K562 (cell line): ENCODE measurements at regions of chr3 and their contacts with region 1.

Region 1: DNA sequence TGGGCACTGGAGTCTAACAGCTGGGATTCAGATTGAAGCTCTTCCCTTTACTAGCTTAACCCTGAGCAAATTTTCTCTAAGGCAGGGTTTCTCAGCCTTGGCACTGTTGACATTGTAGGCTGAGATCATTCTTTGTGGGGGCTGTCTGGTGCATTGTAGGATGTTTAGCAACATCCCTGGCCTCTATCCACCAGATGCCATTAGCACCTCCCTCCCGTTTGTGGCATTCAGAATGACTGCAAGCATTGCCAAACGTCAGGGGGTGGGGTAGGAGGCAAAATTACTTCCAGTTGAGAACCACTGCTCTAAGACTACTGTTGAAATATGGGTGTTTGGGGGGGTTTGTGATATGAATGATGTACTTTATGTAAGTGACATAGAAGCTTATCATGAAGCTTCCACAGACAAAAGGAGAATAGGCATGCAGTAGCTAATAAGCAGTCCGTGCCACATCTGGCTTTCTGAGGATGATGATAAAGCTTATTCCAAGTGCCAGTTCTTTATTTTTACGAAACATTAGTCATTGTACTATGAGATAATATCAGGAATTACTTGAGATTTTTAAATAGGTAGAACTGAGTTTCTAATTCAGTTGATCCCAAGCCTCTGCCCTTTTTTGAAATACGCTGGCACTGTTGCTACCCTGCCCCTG is 39.3 kb downstream of the NKIRAS1 start:
- DNase-seq: no peak
- ATAC-seq: no peak
- H3K4me3 ChIP-seq: no peak overlapping the region
- H3K27ac ChIP-seq: no peak overlapping the region
- H3K4me1 ChIP-seq: peaks cover 3% of the 10 kb centered on the region in 2 experiments; a peak in 3 of 5 replicates
- H3K27me3 ChIP-seq: no peaks in the 10 kb centered on the region
- CTCF ChIP-seq: no peak
- EP300 ChIP-seq: no peak
- POLR2A ChIP-seq: no peak
- RAD21 ChIP-seq: no peak

Region 2: DNA sequence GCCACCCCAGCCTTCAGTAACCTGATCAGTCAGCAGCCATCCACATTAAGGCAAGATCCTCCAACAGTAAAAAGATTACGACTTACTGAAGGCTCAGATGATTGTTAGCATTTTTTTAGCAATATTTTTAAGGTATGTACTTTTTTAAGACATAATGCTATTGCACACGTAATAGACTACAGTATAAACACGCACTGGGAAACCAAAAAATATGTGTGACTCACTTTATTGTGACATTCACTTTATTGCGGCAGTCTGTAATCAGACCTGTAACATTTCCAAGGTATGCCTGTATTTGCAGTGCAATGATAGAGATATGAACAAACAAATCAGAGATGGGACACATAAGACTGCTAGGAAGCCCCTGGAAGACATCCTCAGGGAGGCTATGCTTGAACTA is 297.1 kb before region 1 on chr3:
- CTCF ChIA-PET with region 1: no interaction called
- POLR2A ChIA-PET with region 1: no interaction called
- in situ Hi-C with region 1: no loop called
- intact Hi-C with region 1: no loop called
- DNase-seq: no peak
- ATAC-seq: no peak
- H3K4me3 ChIP-seq: no peak overlapping the region
- H3K27ac ChIP-seq: no peak overlapping the region
- H3K4me1 ChIP-seq: no peaks in the 10 kb centered on the region
- H3K27me3 ChIP-seq: no peaks in the 10 kb centered on the region
- CTCF ChIP-seq: no peak
- EP300 ChIP-seq: no peak
- POLR2A ChIP-seq: no peak
- RAD21 ChIP-seq: no peak

Region 3: GRCh38 chr3:23648326-23648995 is 229.0 kb before region 1 on chr3:
- CTCF ChIA-PET with region 1: no interaction called
- POLR2A ChIA-PET with region 1: no interaction called
- in situ Hi-C with region 1: no loop called
- intact Hi-C with region 1: no loop called
- DNase-seq: peak in 1 of 4 experiments; percentile 5
- ATAC-seq: no peak
- H3K4me3 ChIP-seq: no peak overlapping the region
- H3K27ac ChIP-seq: no peak overlapping the region
- H3K4me1 ChIP-seq: no peaks in the 10 kb centered on the region
- H3K27me3 ChIP-seq: peaks cover 0 to 8% of the 10 kb centered on the region in 2 experiments; a peak in 1 of 5 replicates
- CTCF ChIP-seq: peak in 1 of 3 experiments; percentile 14; a peak in 1 of 6 replicates
- EP300 ChIP-seq: no peak
- POLR2A ChIP-seq: no peak
- RAD21 ChIP-seq: peak in 1 of 2 experiments; percentile 37; a peak in 2 of 4 replicates

Region 4: GRCh38 chr3:23712656-23713559 is 164.5 kb before region 1 on chr3:
- CTCF ChIA-PET with region 1: no interaction called
- POLR2A ChIA-PET with region 1: interaction called, 3 read pairs
- in situ Hi-C with region 1: no loop called
- intact Hi-C with region 1: loop called (anchors 10 kb)
- DNase-seq: peak in 1 of 4 experiments; percentile 19
- ATAC-seq: peak; percentile 71
- H3K4me3 ChIP-seq: no peak overlapping the region
- H3K27ac ChIP-seq: no peak overlapping the region
- H3K4me1 ChIP-seq: no peaks in the 10 kb centered on the region
- H3K27me3 ChIP-seq: peaks cover 14 to 26% of the 10 kb centered on the region in 2 experiments; a peak in 4 of 5 replicates
- CTCF ChIP-seq: peak; percentile 9 to 25 (median 12); a peak in 3 of 6 replicates
- EP300 ChIP-seq: no peak
- POLR2A ChIP-seq: no peak
- RAD21 ChIP-seq: peak in 1 of 2 experiments; percentile 47; a peak in 3 of 4 replicates

Region 5: DNA sequence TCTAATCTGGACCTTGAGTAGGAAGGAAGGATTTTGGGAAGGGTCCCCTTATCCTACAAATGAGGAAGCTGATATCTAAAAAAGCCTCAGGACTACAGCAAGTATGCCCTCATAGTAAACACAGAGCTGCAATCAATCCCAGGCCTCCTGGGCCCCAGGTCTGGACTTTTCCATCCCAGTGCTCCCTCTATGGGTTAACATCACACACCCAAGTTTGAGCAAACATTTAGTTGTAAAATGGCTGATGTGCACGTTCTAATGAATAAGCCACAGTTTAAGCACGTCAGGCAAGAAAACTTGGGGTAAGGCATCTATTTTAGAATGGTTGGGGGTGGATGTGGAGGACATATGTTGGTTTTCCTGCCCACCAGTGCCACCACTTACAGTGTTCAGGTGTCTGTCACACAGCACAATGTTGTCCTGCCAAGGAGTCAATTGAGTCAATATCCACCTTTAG is 116.0 kb before region 1 on chr3:
- CTCF ChIA-PET with region 1: no interaction called
- POLR2A ChIA-PET with region 1: no interaction called
- in situ Hi-C with region 1: no loop called
- intact Hi-C with region 1: no loop called
- DNase-seq: peak in 2 of 4 experiments; percentile 30 to 45
- ATAC-seq: peak; percentile 81
- H3K4me3 ChIP-seq: no peak overlapping the region
- H3K27ac ChIP-seq: no peak overlapping the region
- H3K4me1 ChIP-seq: no peaks in the 10 kb centered on the region
- H3K27me3 ChIP-seq: peaks cover 23 to 40% of the 10 kb centered on the region in 2 experiments
- CTCF ChIP-seq: peak; percentile 38 to 43 (median 42); a peak in 5 of 6 replicates
- EP300 ChIP-seq: no peak
- POLR2A ChIP-seq: no peak
- RAD21 ChIP-seq: peak; percentile 28 to 47

Region 6: GRCh38 chr3:23938688-23939087 is 61.2 kb after region 1 on chr3:
- CTCF ChIA-PET with region 1: no interaction called
- POLR2A ChIA-PET with region 1: no interaction called
- in situ Hi-C with region 1: no loop called
- intact Hi-C with region 1: no loop called
- DNase-seq: peak in 2 of 4 experiments; percentile 23 to 43
- ATAC-seq: peak; percentile 74
- H3K4me3 ChIP-seq: no peak overlapping the region
- H3K27ac ChIP-seq: no peak overlapping the region; the same call in 2 of the 3 replicates
- H3K4me1 ChIP-seq: peaks cover 7 to 20% of the 10 kb centered on the region in 2 experiments; a peak in 4 of 5 replicates
- H3K27me3 ChIP-seq: no peaks in the 10 kb centered on the region
- CTCF ChIP-seq: no peak
- EP300 ChIP-seq: peak; percentile 4; the same call in 1 of the 2 replicates
- POLR2A ChIP-seq: no peak
- RAD21 ChIP-seq: no peak